ENCODE measurements at regions of chr10 and their contacts with region 1.

Region 1: GRCh38 chr10:114304017-114304570 is 65.0 kb downstream of the VWA2 start:
- DNase-seq: peak; percentile 53 to 80
- ATAC-seq: peak; percentile 68 to 78 (median 77)
- H3K4me3 ChIP-seq: peak overlapping the region; percentile 49
- H3K4me3 Mint-ChIP-seq: peak overlapping the region; percentile 90
- H3K27ac ChIP-seq: no peak overlapping the region
- H3K27ac Mint-ChIP-seq: peak overlapping the region; percentile 54 to 63
- H3K4me1 ChIP-seq: peaks cover 18% of the 10 kb centered on the region
- H3K4me1 Mint-ChIP-seq: peaks cover 11 to 13% of the 10 kb centered on the region in 2 donors
- H3K27me3 ChIP-seq: no peaks in the 10 kb centered on the region
- H3K27me3 Mint-ChIP-seq: no peaks in the 10 kb centered on the region
- CTCF ChIP-seq: peak; percentile 75

Region 2: GRCh38 chr10:114103284-114103683 is 200.8 kb before region 1 on chr10:
- intact Hi-C with region 1: no loop called
- DNase-seq: peak in 1 of 2 donors; percentile 65
- ATAC-seq: peak in 2 of 3 donors; percentile 52 to 59
- H3K4me3 ChIP-seq: no peak overlapping the region
- H3K4me3 Mint-ChIP-seq: no peak overlapping the region
- H3K27ac ChIP-seq: no peak overlapping the region
- H3K27ac Mint-ChIP-seq: no peak overlapping the region
- H3K4me1 ChIP-seq: peaks cover 25% of the 10 kb centered on the region
- H3K4me1 Mint-ChIP-seq: peaks cover 30 to 40% of the 10 kb centered on the region in 2 donors
- H3K27me3 ChIP-seq: peaks cover 13% of the 10 kb centered on the region
- H3K27me3 Mint-ChIP-seq: peaks cover 18 to 25% of the 10 kb centered on the region in 2 donors
- CTCF ChIP-seq: peak; percentile 53

Region 3: GRCh38 chr10:114458955-114459354 is 154.9 kb after region 1 on chr10:
- intact Hi-C with region 1: loop called (anchors 10 kb)
- DNase-seq: peak in 1 of 2 donors; percentile 26
- ATAC-seq: peak in 1 of 3 donors; percentile 62
- H3K4me3 ChIP-seq: no peak overlapping the region
- H3K4me3 Mint-ChIP-seq: no peak overlapping the region
- H3K27ac ChIP-seq: no peak overlapping the region
- H3K27ac Mint-ChIP-seq: no peak overlapping the region
- H3K4me1 ChIP-seq: no peaks in the 10 kb centered on the region
- H3K4me1 Mint-ChIP-seq: peaks cover 0 to 6% of the 10 kb centered on the region in 2 donors
- H3K27me3 ChIP-seq: no peaks in the 10 kb centered on the region
- H3K27me3 Mint-ChIP-seq: no peaks in the 10 kb centered on the region
- CTCF ChIP-seq: no peak

Region 4: DNA sequence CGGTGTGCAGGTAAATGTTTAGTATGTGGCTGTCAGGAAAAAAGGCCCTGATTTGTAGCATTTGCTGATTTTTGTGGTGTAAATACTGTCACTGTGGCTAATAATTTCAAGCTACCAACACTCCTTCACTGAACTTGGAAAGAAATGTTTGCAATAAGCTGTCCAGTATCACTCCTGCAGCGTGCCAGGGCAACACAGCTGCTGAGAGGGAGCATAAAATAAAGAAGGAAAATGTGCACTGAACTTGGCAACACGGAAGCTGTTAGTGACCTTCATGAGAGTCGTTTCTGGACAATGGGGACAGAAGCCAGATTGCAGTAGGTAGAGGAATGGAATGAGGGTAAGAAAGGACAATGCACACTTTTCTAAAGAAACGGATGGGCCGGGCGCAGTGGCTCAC is 479.6 kb after region 1 on chr10:
- intact Hi-C with region 1: loop called (anchors 1 kb)
- DNase-seq: no peak
- ATAC-seq: no peak
- H3K4me3 ChIP-seq: no peak overlapping the region
- H3K4me3 Mint-ChIP-seq: no peak overlapping the region
- H3K27ac ChIP-seq: no peak overlapping the region
- H3K27ac Mint-ChIP-seq: no peak overlapping the region
- H3K4me1 ChIP-seq: no peaks in the 10 kb centered on the region
- H3K4me1 Mint-ChIP-seq: no peaks in the 10 kb centered on the region
- H3K27me3 ChIP-seq: no peaks in the 10 kb centered on the region
- H3K27me3 Mint-ChIP-seq: peaks cover 0 to 3% of the 10 kb centered on the region in 2 donors
- CTCF ChIP-seq: no peak

Region 5: DNA sequence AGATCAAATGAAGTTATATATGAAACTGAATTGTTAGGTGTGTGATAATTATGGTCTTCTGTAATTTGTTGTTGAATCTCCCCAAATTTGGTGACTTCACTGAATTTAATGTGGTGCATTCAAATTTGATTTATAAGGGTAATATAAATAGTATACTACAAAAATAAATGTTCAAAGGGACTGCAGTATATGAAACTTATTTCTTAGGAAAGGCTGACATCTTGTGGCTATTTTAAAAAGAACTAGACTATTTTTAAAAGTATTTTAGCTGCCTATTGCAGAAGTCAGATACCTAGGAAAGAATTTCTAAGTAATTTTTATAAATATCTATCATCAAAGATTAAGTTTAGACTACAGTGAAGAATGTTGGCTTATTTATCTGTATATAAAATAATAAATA is 825.7 kb after region 1 on chr10:
- intact Hi-C with region 1: loop called (anchors 10 kb)
- DNase-seq: peak in 1 of 2 donors; percentile 44
- ATAC-seq: no peak
- H3K4me3 ChIP-seq: no peak overlapping the region
- H3K4me3 Mint-ChIP-seq: no peak overlapping the region
- H3K27ac ChIP-seq: no peak overlapping the region
- H3K27ac Mint-ChIP-seq: no peak overlapping the region
- H3K4me1 ChIP-seq: no peaks in the 10 kb centered on the region
- H3K4me1 Mint-ChIP-seq: no peaks in the 10 kb centered on the region
- H3K27me3 ChIP-seq: no peaks in the 10 kb centered on the region
- H3K27me3 Mint-ChIP-seq: no peaks in the 10 kb centered on the region
- CTCF ChIP-seq: peak; percentile 17